ENCODE measurements at regions of chr11 and their contacts with region 1.

Region 1: GRCh38 chr11:9972989-9973388 is 309.1 kb downstream of the SWAP70 start:
- DNase-seq: peak in 1 of 2 experiments; percentile 41
- H3K4me3 ChIP-seq: no peak overlapping the region
- H3K4me3 Mint-ChIP-seq: no peak overlapping the region
- H3K27ac Mint-ChIP-seq: no peak overlapping the region
- H3K4me1 ChIP-seq: peaks cover 18% of the 10 kb centered on the region
- H3K4me1 Mint-ChIP-seq: peaks cover 6% of the 10 kb centered on the region
- H3K27me3 ChIP-seq: no peaks in the 10 kb centered on the region
- H3K27me3 Mint-ChIP-seq: no peaks in the 10 kb centered on the region
- CTCF ChIP-seq: peak; percentile 62 to 82

Region 2: DNA sequence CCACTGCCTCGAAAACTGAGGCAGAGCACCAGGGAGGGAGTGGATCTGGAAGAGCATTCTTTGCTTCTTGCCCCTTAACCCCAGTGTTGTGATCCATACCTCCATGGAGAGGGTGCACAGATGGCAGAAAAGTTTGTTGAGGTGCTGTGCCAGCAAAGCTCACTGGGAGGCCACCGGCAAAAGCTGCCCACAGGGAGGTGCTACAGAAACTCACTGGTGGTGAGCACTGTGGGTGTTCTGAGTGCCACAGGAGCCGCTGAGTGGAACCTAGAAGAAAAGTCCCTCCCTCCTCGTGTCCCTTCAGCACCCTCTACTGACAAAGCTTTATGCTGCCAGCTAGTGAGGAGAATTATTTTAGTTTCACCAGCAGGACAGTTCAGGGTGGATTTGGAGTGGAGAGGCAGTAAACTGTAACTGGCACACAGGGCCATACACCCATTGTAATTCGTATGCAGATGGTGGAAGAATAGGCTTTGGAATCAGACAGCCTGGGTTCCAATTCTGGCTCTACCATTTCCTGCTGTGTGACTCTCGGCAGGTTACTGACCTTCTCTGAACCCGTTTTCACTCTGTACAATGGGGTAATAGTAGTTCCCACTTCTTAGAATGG is 224.5 kb before region 1 on chr11:
- CTCF ChIA-PET with region 1: no interaction called
- POLR2A ChIA-PET with region 1: no interaction called
- intact Hi-C with region 1: no loop called
- DNase-seq: peak; percentile 70 to 75
- H3K4me3 ChIP-seq: no peak overlapping the region
- H3K4me3 Mint-ChIP-seq: no peak overlapping the region
- H3K27ac Mint-ChIP-seq: no peak overlapping the region
- H3K4me1 ChIP-seq: no peaks in the 10 kb centered on the region
- H3K4me1 Mint-ChIP-seq: peaks cover 6% of the 10 kb centered on the region
- H3K27me3 ChIP-seq: no peaks in the 10 kb centered on the region
- H3K27me3 Mint-ChIP-seq: no peaks in the 10 kb centered on the region
- CTCF ChIP-seq: peak; percentile 49 to 74

Region 3: DNA sequence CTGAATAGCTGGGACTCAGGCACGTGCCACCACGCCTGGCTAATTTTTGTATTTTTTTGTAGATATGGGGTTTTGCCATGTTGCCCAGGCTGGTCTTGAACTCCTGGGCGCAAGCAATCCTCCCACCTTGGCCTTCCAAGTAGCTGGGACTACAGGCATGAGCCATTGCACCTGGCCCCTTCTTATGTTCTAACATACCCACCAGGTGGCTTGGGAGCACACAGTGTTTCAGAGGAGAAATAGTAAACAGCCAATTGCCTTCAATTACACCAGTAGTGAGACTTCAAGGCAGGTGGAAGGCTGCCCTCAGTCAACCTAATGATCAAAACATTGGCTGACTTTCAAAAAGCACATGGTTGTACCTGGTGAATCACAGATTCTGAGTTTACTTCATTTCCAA is 141.9 kb before region 1 on chr11:
- CTCF ChIA-PET with region 1: no interaction called
- POLR2A ChIA-PET with region 1: interaction called, 3 read pairs
- intact Hi-C with region 1: loop called (anchors 1 kb)
- DNase-seq: peak in 1 of 2 experiments; percentile 39
- H3K4me3 ChIP-seq: no peak overlapping the region
- H3K4me3 Mint-ChIP-seq: no peak overlapping the region
- H3K27ac Mint-ChIP-seq: no peak overlapping the region
- H3K4me1 ChIP-seq: peaks cover 11% of the 10 kb centered on the region
- H3K4me1 Mint-ChIP-seq: peaks cover 5% of the 10 kb centered on the region
- H3K27me3 ChIP-seq: no peaks in the 10 kb centered on the region
- H3K27me3 Mint-ChIP-seq: no peaks in the 10 kb centered on the region
- CTCF ChIP-seq: no peak

Region 4: DNA sequence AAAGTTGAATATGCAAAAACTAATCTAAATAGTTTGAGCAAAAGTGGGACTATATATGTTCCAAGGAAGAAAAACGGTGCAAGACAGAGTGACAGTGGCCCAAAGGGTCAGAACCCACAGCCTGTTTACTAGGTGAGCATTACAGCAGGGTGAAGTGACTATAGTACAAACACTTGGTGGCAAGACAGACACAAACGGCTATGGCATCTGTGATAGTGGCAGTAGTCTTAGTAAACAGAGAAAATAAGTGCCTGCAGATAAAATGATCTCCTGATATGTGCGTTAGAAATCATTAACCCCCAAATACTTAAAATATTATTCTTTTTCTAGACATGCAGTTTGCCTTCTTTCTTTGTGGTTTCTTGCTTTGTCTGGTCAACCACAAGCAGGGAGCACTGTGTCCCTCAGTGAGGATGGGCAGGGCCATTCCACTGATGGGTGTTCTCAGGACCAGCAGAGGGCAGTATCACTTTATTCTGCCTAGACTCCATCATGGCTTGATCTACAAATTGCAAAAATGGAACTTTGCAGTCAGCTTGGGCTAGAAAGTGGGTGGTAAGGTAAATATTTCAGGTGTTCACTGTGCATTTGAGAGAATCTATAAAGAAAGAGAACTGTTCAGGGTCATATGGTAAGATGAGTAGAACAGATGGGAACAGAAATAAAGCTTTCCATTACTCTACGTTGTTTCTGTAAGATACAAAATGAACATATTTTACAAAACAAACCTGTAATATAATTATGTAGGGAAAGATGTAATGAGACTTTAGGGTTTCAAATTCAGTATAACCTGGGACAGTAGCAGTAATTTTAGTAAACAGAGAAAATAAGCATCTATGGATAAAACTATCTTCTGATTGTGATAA is 110.9 kb before region 1 on chr11:
- CTCF ChIA-PET with region 1: interaction called, 7 read pairs
- POLR2A ChIA-PET with region 1: no interaction called
- intact Hi-C with region 1: loop called (anchors 1 kb)
- DNase-seq: peak; percentile 77 to 82
- H3K4me3 ChIP-seq: no peak overlapping the region
- H3K4me3 Mint-ChIP-seq: no peak overlapping the region
- H3K27ac Mint-ChIP-seq: no peak overlapping the region
- H3K4me1 ChIP-seq: peaks cover 60% of the 10 kb centered on the region
- H3K4me1 Mint-ChIP-seq: peaks cover 41% of the 10 kb centered on the region
- H3K27me3 ChIP-seq: no peaks in the 10 kb centered on the region
- H3K27me3 Mint-ChIP-seq: no peaks in the 10 kb centered on the region
- CTCF ChIP-seq: peak; percentile 77 to 87